Aorta (tissue), 5 donors: ENCODE measurements at regions of chr1 and their contacts with region 1.

Region 1: GRCh38 chr1:91781371-91781825 is 104.6 kb downstream of the TGFBR3 start:
- DNase-seq: no peak
- ATAC-seq: no peak
- H3K4me3 ChIP-seq: no peak overlapping the region
- H3K27ac ChIP-seq: peak overlapping the region in 1 of 2 donors; percentile 84
- H3K4me1 ChIP-seq: peaks cover 3 to 11% of the 10 kb centered on the region in 2 donors
- H3K27me3 ChIP-seq: no peaks in the 10 kb centered on the region

Region 2: GRCh38 chr1:91697416-91697815 is 84.0 kb before region 1 on chr1:
- intact Hi-C with region 1: loop called in 1 of 2 experiments (anchors 5 kb)
- DNase-seq: no peak
- ATAC-seq: no peak
- H3K4me3 ChIP-seq: no peak overlapping the region
- H3K27ac ChIP-seq: no peak overlapping the region
- H3K4me1 ChIP-seq: peaks cover 2 to 5% of the 10 kb centered on the region in 2 donors
- H3K27me3 ChIP-seq: no peaks in the 10 kb centered on the region

Region 3: GRCh38 chr1:91707890-91708218 is 73.5 kb before region 1 on chr1:
- intact Hi-C with region 1: no loop called
- DNase-seq: no peak
- ATAC-seq: no peak
- H3K4me3 ChIP-seq: no peak overlapping the region
- H3K27ac ChIP-seq: no peak overlapping the region
- H3K4me1 ChIP-seq: peaks cover 0 to 2% of the 10 kb centered on the region in 2 donors
- H3K27me3 ChIP-seq: no peaks in the 10 kb centered on the region

Region 4: GRCh38 chr1:91846007-91846617 is 64.7 kb after region 1 on chr1:
- intact Hi-C with region 1: loop called in 1 of 2 experiments (anchors 5 kb)
- DNase-seq: peak in 1 of 2 donors; percentile 53
- ATAC-seq: peak; percentile 69
- H3K4me3 ChIP-seq: peak overlapping the region in 1 of 2 donors; percentile 28
- H3K27ac ChIP-seq: peak overlapping the region; percentile 30 to 79
- H3K4me1 ChIP-seq: peaks cover 3 to 4% of the 10 kb centered on the region in 2 donors
- H3K27me3 ChIP-seq: no peaks in the 10 kb centered on the region